ENCODE measurements at regions of chr6 and their contacts with region 1.

Region 1: DNA sequence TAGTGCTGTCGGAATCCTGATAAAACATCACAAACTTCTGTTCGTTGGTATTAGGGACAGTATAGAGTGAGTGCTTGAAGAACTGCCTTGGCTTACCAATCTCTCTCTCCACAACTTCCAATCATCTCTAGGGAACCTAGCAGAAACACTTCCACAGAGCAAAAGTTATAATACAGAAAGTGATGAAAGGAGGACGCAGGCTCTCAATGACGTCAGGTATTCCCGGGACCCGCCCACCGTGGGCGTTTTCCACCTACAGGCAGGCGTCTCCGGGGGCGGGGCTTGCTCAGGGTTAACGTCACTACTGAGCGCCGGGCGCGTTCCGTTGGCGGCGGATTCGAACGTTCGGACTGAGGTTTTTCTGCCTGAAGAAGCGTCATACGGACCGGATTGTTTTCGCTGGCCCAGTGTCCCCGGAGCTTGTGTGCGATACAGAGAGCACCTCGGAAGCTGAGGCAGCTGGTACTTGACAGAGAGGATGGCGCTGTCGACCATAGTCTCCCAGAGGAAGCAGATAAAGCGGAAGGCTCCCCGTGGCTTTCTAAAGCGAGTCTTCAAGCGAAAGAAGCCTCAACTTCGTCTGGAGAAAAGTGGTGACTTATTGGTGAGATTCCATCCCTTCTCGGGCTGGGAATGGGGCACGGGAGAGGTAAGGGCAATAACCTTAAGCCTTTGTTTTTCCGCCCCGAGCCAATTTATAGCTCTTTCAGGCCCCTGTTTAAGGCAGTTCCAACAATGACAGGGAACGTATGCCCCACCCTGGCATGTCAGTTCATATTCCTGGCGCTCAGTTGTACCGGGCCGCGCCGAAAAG is at the start of gene CENPW:
- DNase-seq: peak; percentile 95
- H3K4me3 Mint-ChIP-seq: no peak within 1 kb of the TSS
- H3K27ac Mint-ChIP-seq: no peak within 1 kb of the TSS
- H3K4me1 Mint-ChIP-seq: peaks cover 30% of the 10 kb centered on the region
- H3K27me3 Mint-ChIP-seq: no peaks in the 10 kb centered on the region
- total RNA-seq, gene CENPW: 54.3 to 54.6 TPM

Region 2: GRCh38 chr6:125779924-125780539 is 560.0 kb before region 1 on chr6:
- CTCF ChIA-PET with region 1: interaction called, 4 read pairs
- POLR2A ChIA-PET with region 1: interaction called, 12 read pairs
- DNase-seq: peak; percentile 86
- H3K4me3 Mint-ChIP-seq: no peak overlapping the region
- H3K27ac Mint-ChIP-seq: no peak overlapping the region
- H3K4me1 Mint-ChIP-seq: peaks cover 13% of the 10 kb centered on the region
- H3K27me3 Mint-ChIP-seq: peaks cover 18% of the 10 kb centered on the region

Region 3: GRCh38 chr6:126361832-126362412 is 21.9 kb after region 1 on chr6:
- CTCF ChIA-PET with region 1: interaction called, 23 read pairs
- POLR2A ChIA-PET with region 1: interaction called, 6 read pairs
- DNase-seq: no peak
- H3K4me3 Mint-ChIP-seq: no peak overlapping the region
- H3K27ac Mint-ChIP-seq: no peak overlapping the region
- H3K4me1 Mint-ChIP-seq: no peaks in the 10 kb centered on the region
- H3K27me3 Mint-ChIP-seq: no peaks in the 10 kb centered on the region